Activated CD4-positive, alpha-beta T cell treated with anti-CD3 and anti-CD28 coated beads for 36 hours (primary cell): ENCODE measurements at regions of chr10 and their contacts with region 1.

Region 1: DNA sequence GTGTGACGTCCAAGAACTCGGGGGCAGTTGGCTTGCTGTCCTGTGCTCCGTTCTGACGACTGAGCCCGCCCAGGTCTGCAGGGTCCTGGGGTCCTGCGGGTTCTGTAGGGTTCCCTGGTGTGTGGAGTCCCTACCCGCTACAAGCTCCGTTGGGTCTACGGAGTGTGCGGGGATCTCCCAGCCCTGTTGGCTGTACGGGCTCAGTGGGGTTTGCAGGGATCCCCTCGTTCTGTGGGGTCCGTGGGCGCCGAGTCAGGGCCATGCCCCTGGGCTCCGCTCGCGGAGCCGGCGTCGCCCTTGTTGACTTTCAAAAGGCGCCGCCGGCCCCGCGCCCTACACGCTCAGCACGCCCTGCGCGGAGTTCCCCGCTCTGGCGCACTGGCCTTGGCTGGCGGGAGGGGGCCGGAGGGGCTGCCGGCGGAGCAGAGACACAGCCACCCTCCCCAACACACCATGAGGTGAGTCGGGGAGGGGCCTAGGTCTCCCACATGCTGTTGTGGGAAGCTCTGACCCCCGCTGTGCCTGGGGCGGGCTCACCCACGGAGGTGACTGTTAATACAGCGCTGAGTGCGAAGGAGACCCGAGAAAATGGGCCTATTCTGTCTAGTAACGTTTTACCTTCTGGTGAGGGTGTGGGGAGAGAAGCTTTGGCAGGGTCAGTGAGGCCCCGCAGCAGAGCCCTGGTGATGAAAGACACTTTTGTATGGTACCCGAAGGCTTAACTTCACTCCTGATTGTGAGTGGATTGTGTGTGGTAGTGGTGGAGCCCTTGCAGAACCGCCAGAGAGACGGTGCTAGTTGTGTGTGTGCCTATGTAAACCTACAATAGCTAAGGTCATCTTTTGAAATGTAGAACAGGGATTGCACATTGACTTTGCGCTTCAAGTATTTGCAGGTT is 8.1 kb downstream of the TASOR2 start:
- DNase-seq: peak; percentile 85
- ATAC-seq: peak; percentile 88
- H3K4me3 Mint-ChIP-seq: peak overlapping the region; percentile 79
- H3K27ac Mint-ChIP-seq: peak overlapping the region; percentile 87
- H3K4me1 Mint-ChIP-seq: peaks cover 76% of the 10 kb centered on the region
- H3K27me3 Mint-ChIP-seq: no peaks in the 10 kb centered on the region

Region 2: GRCh38 chr10:5638494-5638893 is 54.2 kb before region 1 on chr10:
- CTCF ChIA-PET with region 1: no interaction called
- POLR2A ChIA-PET with region 1: no interaction called
- intact Hi-C with region 1: no loop called
- DNase-seq: no peak
- ATAC-seq: no peak
- H3K4me3 Mint-ChIP-seq: no peak overlapping the region
- H3K27ac Mint-ChIP-seq: no peak overlapping the region
- H3K4me1 Mint-ChIP-seq: no peaks in the 10 kb centered on the region
- H3K27me3 Mint-ChIP-seq: no peaks in the 10 kb centered on the region

Region 3: GRCh38 chr10:5648584-5649457 is 43.9 kb before region 1 on chr10:
- CTCF ChIA-PET with region 1: no interaction called
- POLR2A ChIA-PET with region 1: no interaction called
- intact Hi-C with region 1: loop called in 1 of 2 experiments (anchors 1 kb)
- DNase-seq: peak; percentile 27
- ATAC-seq: peak; percentile 68
- H3K4me3 Mint-ChIP-seq: peak overlapping the region; percentile 6
- H3K27ac Mint-ChIP-seq: peak overlapping the region; percentile 31
- H3K4me1 Mint-ChIP-seq: no peaks in the 10 kb centered on the region
- H3K27me3 Mint-ChIP-seq: no peaks in the 10 kb centered on the region

Region 4: DNA sequence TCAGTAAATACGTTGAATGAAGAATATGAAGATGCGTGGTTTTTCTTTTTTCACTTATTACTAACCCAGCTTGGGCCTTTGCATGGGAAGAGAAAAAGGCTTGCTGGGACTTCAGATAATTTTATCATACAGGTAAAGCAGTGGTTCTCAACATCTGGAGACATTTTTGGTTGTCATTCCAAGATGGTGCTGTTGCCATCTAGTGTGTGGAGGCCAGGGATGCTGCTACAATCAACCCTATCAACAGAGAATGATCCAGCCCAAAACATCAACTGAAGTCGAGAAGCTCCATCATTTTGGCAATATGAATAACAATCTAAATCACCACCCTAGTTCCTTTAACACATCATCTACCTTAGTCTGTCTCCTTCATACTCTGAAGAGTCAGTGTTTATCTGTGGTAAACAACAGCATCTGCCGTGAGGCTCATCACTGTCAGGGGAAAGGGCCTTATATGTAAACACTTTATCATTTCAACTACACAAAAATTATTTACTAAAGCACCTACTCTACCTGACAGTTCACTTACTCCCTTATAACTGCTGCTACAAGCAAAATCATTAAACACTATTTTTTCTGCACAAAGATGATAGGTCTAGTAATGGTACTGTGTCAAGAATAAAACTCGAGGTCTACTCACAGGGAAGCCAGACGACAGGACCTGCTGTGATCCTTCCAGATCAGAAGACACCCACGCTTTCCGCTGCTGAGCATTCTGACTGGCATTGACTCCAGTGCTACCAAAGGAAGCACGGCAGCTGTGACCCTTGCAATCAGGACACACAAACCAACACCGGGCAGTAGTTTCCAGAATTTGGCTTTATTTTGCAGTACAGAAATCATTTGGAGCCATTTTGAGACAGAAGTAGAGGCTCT is 72.0 kb after region 1 on chr10:
- CTCF ChIA-PET with region 1: no interaction called
- POLR2A ChIA-PET with region 1: no interaction called
- intact Hi-C with region 1: loop called in 1 of 2 experiments (anchors 5 kb)
- DNase-seq: peak; percentile 53
- ATAC-seq: peak; percentile 58
- H3K4me3 Mint-ChIP-seq: no peak overlapping the region
- H3K27ac Mint-ChIP-seq: peak overlapping the region; percentile 76
- H3K4me1 Mint-ChIP-seq: peaks cover 24% of the 10 kb centered on the region
- H3K27me3 Mint-ChIP-seq: no peaks in the 10 kb centered on the region